IMR-90 (cell line): ENCODE measurements at regions of chr3 and their contacts with region 1.

Region 1: GRCh38 chr3:72768006-72768441 is 80.2 kb downstream of the SHQ1 start:
- DNase-seq: no peak
- ATAC-seq: no peak; the same call in 1 of the 2 replicates
- H3K4me3 ChIP-seq: no peak overlapping the region
- H3K27ac ChIP-seq: no peak overlapping the region
- H3K4me1 ChIP-seq: no peaks in the 10 kb centered on the region
- H3K27me3 ChIP-seq: no peaks in the 10 kb centered on the region
- CTCF ChIP-seq: no peak
- POLR2A ChIP-seq: no peak
- RAD21 ChIP-seq: no peak

Region 2: DNA sequence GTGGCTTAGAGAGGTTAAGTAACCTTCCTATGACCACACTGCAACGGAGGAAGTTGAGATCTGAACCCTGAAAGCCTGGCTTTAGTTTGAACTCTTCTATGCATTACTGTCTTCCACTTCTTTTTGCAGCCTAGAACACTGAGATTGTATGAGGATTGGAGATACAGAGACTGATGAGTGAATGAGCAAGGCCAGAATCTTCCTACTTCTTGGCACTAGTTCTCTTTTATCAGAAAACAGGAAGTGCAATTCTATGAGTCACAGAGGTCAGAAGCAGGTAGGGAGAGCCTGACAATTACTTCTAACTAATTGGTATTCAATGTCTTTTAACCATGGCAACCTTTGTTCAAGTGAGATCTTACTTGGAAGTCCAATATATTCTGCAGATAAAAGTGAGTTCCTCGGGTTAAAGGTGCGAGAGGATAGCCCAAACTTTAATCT is 138.8 kb before region 1 on chr3:
- CTCF ChIA-PET with region 1: no interaction called
- POLR2A ChIA-PET with region 1: no interaction called
- dilution Hi-C with region 1: no loop called
- in situ Hi-C with region 1: no loop called
- intact Hi-C with region 1: no loop called
- DNase-seq: no peak
- ATAC-seq: no peak
- H3K4me3 ChIP-seq: no peak overlapping the region
- H3K27ac ChIP-seq: no peak overlapping the region
- H3K4me1 ChIP-seq: no peaks in the 10 kb centered on the region
- H3K27me3 ChIP-seq: peaks cover 3% of the 10 kb centered on the region
- CTCF ChIP-seq: no peak
- POLR2A ChIP-seq: no peak
- RAD21 ChIP-seq: no peak

Region 3: GRCh38 chr3:73234354-73235014 is 466.5 kb after region 1 on chr3:
- CTCF ChIA-PET with region 1: no interaction called
- POLR2A ChIA-PET with region 1: no interaction called
- dilution Hi-C with region 1: no loop called
- in situ Hi-C with region 1: no loop called
- intact Hi-C with region 1: loop called (anchors 10 kb)
- DNase-seq: no peak
- ATAC-seq: no peak
- H3K4me3 ChIP-seq: no peak overlapping the region
- H3K27ac ChIP-seq: no peak overlapping the region
- H3K4me1 ChIP-seq: no peaks in the 10 kb centered on the region
- H3K27me3 ChIP-seq: no peaks in the 10 kb centered on the region; the same call in 1 of the 2 replicates
- CTCF ChIP-seq: no peak
- POLR2A ChIP-seq: no peak
- RAD21 ChIP-seq: no peak